MCF 10A (cell line): ENCODE measurements at regions of chr5 and their contacts with region 1.

Region 1: DNA sequence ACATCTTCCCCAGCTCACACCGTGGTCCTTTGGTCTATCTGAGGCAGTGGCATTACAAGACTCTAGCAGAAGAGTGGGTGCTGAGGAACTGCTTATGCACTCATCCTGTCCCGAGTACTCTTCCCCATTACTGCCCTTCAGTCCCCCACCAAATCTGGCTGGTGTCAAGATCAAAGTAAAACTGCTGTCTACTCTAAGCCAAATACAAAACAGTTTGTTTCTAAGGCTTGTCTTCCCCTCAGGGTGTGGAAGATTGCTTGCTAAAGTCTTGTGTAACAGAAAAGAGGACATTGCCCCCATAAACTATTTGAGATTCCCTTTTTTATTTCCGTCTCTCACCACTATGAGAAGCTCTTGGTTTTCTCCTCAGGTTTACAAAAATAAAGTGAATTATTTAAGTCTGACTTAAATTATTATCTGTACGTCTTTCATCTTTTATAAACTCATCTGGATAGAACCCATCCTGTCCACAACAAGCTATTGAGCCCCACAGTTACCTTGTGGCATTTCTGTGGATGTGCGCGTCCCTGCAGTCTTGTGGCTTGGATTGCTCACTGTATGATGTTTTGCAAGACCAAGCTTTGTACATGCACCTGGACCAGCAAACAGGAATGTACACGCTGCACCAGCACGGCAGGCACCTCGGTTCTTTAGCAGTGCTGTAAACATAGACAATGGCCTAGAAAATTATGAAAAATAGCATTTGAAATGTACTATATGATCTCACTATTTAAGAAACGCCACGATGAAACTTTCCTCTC is 61.0 kb downstream of the CYSTM1 start:
- DNase-seq: no peak
- H3K4me3 Mint-ChIP-seq: no peak overlapping the region
- H3K27ac Mint-ChIP-seq: no peak overlapping the region
- H3K4me1 Mint-ChIP-seq: peaks cover 23% of the 10 kb centered on the region
- H3K27me3 Mint-ChIP-seq: no peaks in the 10 kb centered on the region
- CTCF ChIP-seq: no peak

Region 2: DNA sequence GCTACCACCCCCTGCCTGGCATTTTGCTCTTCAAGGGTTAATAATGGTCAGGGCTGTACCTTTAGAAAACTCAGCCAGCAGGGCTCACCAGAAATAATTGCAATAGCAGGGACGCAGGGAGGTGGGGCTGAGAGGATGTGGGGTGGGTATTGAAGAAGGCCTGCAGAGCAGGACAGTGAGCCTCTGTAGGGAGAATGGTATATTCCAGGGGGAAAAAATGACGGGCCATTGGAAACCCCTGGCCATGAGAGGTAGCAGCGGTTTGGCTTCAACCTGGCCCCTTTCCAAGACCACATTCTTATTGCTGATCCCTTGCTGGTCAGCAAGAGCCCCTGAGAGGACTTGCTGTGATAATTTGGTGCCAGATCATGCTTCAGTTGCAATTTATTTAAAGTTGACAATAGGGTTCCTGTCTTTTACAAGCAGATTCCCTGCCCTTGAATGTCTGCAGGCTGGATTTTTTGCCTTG is 1519.5 kb before region 1 on chr5:
- CTCF ChIA-PET with region 1: no interaction called
- POLR2A ChIA-PET with region 1: no interaction called
- intact Hi-C with region 1: no loop called
- DNase-seq: peak; percentile 55
- H3K4me3 Mint-ChIP-seq: no peak overlapping the region
- H3K27ac Mint-ChIP-seq: peak overlapping the region; percentile 11
- H3K4me1 Mint-ChIP-seq: peaks cover 17% of the 10 kb centered on the region
- H3K27me3 Mint-ChIP-seq: no peaks in the 10 kb centered on the region
- CTCF ChIP-seq: no peak

Region 3: DNA sequence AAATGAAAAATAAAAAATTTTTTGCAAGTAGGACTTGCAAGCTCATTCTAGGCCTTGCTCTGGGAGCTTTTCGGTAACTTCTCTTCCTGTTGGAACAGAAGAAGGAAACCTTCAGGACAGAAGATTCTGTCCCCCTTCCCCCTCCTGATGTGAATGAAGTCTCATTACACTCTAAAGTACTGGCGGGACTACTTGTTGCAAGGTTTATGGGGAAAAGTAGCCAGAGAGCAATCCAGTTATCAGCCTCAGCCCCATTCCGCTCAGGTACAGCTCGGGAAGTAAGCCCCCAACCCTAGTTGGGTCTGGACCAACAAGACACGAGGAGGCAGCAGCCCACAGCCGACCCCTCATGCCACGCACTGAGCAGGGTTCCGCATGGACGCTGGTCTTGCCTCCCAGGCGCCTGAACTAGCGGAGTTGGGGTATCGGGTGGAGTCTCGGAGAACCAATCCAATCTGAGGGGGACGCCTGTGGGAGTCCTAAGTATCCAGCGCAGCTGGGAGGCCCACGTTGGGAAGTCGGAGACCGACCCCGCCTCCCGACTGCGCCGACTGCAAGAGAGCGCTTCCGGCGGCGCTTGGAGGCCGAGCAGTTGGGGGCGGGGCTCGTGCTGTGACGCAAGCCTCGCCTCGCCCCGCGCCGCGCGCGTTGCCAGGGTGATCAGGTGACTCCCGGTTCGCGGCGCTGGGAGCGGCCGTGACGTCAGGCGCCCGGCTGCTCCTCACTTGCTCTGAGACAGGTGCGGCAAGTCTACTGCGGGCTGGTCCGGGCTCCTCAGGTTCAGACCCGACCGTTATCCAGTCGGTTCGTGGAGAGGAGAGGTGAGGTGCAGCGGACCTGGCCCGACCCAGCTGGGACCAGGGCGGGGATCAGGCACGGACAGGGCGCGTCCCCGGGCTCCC is 61.3 kb before region 1 on chr5 and contains the start of gene CYSTM1:
- CTCF ChIA-PET with region 1: interaction called, 6 read pairs
- POLR2A ChIA-PET with region 1: interaction called, 48 read pairs
- intact Hi-C with region 1: loop called (anchors 2 kb)
- DNase-seq: peak; percentile 98
- H3K4me3 Mint-ChIP-seq: peak within 1 kb of the TSS; percentile 89
- H3K27ac Mint-ChIP-seq: peak within 1 kb of the TSS; percentile 98
- H3K4me1 Mint-ChIP-seq: peaks cover 11% of the 10 kb centered on the region
- H3K27me3 Mint-ChIP-seq: no peaks in the 10 kb centered on the region
- CTCF ChIP-seq: no peak
- total RNA-seq, gene CYSTM1: 59.4 and 105 TPM in 2 replicates

Region 4: DNA sequence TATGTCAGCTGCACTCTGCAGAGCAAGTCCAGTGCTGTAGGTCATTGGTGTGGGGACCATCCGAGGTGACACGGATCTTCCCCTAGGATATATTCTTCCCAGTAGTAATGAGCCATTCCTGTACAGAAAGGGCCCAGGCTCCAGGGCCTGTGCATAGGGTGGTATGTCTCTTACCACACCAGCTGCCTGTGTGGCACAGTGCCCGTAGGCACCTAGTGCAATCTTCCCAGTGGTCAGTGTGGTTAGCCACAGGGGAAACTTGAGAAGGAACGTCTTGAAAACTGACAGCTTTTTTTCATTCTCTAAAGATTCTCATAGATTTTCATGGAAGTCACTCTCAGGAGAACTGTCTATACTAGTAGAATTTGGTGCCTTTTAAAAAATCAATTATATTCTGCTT is 21.1 kb before region 1 on chr5:
- CTCF ChIA-PET with region 1: interaction called, 6 read pairs
- POLR2A ChIA-PET with region 1: interaction called, 23 read pairs
- intact Hi-C with region 1: no loop called
- DNase-seq: peak; percentile 89
- H3K4me3 Mint-ChIP-seq: no peak overlapping the region
- H3K27ac Mint-ChIP-seq: no peak overlapping the region
- H3K4me1 Mint-ChIP-seq: peaks cover 17% of the 10 kb centered on the region
- H3K27me3 Mint-ChIP-seq: no peaks in the 10 kb centered on the region
- CTCF ChIP-seq: no peak